ENCODE measurements at regions of chr9 and their contacts with region 1.

Region 1: DNA sequence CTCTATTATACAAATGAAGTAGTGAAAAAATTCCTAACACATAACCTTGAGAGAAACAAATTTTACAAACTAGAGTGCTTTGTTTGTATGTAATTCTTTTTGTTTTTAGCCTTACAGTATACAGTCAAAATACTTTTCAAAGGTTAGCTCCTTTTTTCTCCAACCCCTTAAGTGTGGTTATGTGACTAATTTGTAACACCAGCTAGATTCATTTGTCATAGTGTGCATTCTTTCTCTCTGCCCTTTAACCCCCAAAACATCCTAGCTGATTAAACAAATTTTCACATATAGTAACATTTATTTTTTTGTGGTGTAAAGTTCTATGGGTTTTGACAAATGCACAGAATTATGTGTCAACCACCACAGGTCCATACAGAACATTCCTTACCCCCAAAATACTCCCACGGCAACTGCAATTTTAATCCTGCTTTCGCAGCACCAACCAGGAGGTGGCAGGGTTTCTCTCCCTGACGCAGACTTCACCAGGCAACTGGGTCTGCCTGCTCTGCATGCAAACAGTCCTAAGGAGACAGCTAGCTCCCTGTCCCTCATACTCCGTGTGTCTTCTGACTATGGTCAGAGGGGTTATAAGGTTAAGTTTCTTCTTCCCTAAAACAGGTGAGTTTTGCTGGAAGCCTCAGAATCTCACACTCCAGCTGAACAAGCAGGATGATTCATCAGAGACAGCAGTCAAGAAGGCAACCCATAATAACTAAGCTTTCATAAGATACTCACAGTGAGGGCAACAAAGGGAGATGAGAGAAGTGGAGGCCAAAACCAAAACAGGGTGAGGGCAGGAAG is 44.5 kb upstream of the NR5A1 start:
- DNase-seq: peak; percentile 56 to 78
- H3K4me3 ChIP-seq: no peak overlapping the region
- H3K27ac ChIP-seq: no peak overlapping the region
- H3K4me1 ChIP-seq: peaks cover 3 to 8% (median 5%) of the 10 kb centered on the region in 4 experiments; a peak in 5 of 7 replicates
- H3K27me3 ChIP-seq: no peaks in the 10 kb centered on the region
- CTCF ChIP-seq: peak; percentile 86 to 95 (median 93)
- EP300 ChIP-seq: no peak
- POLR2A ChIP-seq: no peak
- RAD21 ChIP-seq: peak; percentile 94 to 98

Region 2: DNA sequence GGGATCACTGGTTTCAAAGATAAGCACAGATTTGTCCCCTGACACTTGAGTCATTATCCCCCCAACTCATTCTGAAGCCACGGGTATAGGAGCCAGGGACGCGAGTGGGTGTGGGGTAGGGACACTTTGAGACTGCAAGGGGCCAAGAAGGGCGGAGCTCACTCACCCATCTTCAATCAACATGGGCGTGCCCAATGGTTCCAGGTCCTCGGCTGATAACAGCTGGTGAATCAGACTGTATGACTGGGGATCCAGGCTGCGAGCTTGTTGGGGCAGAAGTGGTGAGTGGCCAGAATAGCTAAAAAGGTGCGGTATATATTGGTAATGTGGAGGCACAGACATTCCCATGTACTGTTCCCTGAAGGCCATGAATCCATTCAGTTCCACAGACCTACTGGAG is 13.7 kb before region 1 on chr9:
- CTCF ChIA-PET with region 1: interaction called, 13 read pairs
- POLR2A ChIA-PET with region 1: interaction called, 3 read pairs
- DNase-seq: no peak
- H3K4me3 ChIP-seq: no peak overlapping the region
- H3K27ac ChIP-seq: no peak overlapping the region
- H3K4me1 ChIP-seq: no peaks in the 10 kb centered on the region
- H3K27me3 ChIP-seq: no peaks in the 10 kb centered on the region
- CTCF ChIP-seq: no peak
- EP300 ChIP-seq: no peak
- POLR2A ChIP-seq: no peak
- RAD21 ChIP-seq: no peak

Region 3: GRCh38 chr9:124574534-124575341 is 23.1 kb after region 1 on chr9:
- CTCF ChIA-PET with region 1: interaction called, 30 read pairs
- POLR2A ChIA-PET with region 1: interaction called, 4 read pairs
- DNase-seq: no peak
- H3K4me3 ChIP-seq: no peak overlapping the region
- H3K27ac ChIP-seq: no peak overlapping the region
- H3K4me1 ChIP-seq: peaks cover 0 to 17% (median 5%) of the 10 kb centered on the region in 4 experiments; a peak in 4 of 7 replicates
- H3K27me3 ChIP-seq: no peaks in the 10 kb centered on the region
- CTCF ChIP-seq: no peak
- EP300 ChIP-seq: no peak
- POLR2A ChIP-seq: no peak
- RAD21 ChIP-seq: no peak

Region 4: GRCh38 chr9:124593651-124594058 is 42.0 kb after region 1 on chr9:
- CTCF ChIA-PET with region 1: interaction called, 21 read pairs
- POLR2A ChIA-PET with region 1: interaction called, 3 read pairs
- DNase-seq: peak; percentile 59 to 71
- H3K4me3 ChIP-seq: peak overlapping the region; percentile 12 to 55 (median 28); a peak in 6 of 8 replicates
- H3K27ac ChIP-seq: peak overlapping the region; percentile 69
- H3K4me1 ChIP-seq: peaks cover 7 to 39% (median 29%) of the 10 kb centered on the region in 4 experiments
- H3K27me3 ChIP-seq: no peaks in the 10 kb centered on the region
- CTCF ChIP-seq: no peak
- EP300 ChIP-seq: peak in 1 of 2 experiments; percentile 91; a peak in 2 of 3 replicates
- POLR2A ChIP-seq: peak in 1 of 2 experiments; percentile 18; a peak in 2 of 3 replicates
- RAD21 ChIP-seq: peak in 1 of 2 experiments; percentile 20; a peak in 1 of 4 replicates

Region 5: DNA sequence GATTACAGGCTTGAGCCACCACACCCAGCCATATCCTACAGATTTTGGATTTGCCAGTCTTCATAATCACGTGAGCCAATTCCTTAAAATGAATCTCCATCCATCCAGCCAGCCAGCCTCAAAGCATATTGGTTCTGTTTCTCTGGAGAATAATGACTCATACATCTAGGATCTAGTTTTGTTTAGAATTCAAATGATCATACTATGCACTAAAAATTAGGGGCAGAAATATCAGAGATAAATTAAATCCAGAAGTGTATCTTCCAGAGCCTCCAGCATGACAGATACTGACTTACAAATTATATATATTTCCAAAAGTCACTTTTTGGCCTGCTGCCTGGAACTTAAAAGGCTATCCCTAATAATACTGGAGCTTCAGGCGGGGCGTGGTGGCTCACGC is 74.6 kb after region 1 on chr9:
- CTCF ChIA-PET with region 1: interaction called, 26 read pairs
- POLR2A ChIA-PET with region 1: no interaction called
- DNase-seq: no peak
- H3K4me3 ChIP-seq: no peak overlapping the region
- H3K27ac ChIP-seq: no peak overlapping the region
- H3K4me1 ChIP-seq: peaks cover 0 to 4% (median 0%) of the 10 kb centered on the region in 4 experiments; a peak in 2 of 7 replicates
- H3K27me3 ChIP-seq: no peaks in the 10 kb centered on the region
- CTCF ChIP-seq: no peak
- EP300 ChIP-seq: no peak
- POLR2A ChIP-seq: no peak
- RAD21 ChIP-seq: no peak